GM10248 (cell line): ENCODE measurements at regions of chr3 and their contacts with region 1.

Region 1: DNA sequence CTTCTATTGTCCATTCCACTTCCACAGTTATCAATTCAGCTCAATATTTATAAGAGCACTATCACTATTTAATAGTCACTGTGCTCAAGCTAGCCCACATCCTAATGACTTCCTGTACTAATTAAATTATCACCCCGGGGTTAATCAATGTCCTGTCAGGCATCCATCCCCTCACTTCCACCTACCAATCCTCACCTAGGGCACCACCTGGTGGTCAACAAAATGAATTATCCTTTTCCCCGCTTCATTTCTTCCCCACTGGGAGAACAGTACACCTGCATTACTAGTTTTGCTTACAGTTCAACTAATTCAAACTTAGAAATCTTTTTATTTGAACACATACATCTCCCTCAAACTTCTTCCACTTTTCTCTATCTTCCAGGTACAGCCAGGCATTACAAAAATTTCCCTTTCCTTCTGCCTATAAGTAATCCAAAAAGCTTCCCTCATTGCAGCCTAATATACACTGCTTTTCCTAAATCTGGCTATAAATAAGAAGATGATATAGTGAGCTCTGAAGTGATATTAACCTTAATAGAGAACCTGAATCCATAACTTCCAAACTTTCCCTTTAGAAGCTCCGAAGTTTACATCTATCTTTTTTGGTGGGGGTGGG is 68.5 kb downstream of the TMCC1 start:
- DNase-seq: peak; percentile 49
- CTCF ChIP-seq: peak; percentile 55

Region 2: DNA sequence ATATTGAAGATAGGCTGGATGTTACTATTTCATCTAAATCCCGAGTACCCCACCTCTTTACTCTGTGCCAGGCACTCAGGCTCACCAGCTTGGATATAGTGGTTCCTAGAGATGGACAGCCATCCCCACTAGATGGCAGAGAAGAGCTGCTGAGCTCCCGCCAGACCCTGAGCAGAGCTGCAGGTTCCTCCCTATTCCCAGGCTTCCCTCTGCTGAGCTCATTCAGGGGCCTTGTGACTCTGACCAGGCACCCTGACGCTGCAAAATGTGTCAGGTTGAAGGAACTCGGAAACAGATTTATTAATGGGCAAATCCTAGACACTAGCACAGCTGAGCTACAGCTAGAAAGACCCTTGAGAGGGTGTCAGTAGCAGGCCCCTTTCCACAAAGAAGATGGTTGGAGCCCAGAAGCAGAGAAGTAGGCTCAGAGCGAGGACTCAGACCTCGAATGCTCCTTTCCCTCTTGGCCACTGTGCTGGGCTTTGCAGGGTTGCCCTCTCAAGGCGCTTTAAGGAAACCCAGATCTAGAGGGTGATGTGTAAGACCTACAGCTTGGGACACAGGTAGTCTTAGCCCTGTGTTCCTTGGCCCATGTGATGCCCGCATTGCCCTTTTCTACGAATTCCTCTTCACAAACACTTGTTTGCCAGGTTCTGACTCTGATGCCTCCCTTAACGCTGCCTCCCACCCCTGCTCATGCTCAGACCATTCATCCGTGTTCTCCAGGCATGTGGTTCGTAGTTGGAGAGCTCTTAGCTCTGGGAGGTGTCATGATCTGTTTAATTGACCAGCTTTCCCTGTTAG is 334.6 kb before region 1 on chr3:
- CTCF ChIA-PET with region 1: interaction called, 20 read pairs
- POLR2A ChIA-PET with region 1: no interaction called
- DNase-seq: peak; percentile 83
- CTCF ChIP-seq: peak; percentile 93

Region 3: GRCh38 chr3:129627429-129628168 is 197.4 kb before region 1 on chr3:
- CTCF ChIA-PET with region 1: interaction called, 15 read pairs
- POLR2A ChIA-PET with region 1: no interaction called
- DNase-seq: peak; percentile 85
- CTCF ChIP-seq: peak; percentile 90

Region 4: DNA sequence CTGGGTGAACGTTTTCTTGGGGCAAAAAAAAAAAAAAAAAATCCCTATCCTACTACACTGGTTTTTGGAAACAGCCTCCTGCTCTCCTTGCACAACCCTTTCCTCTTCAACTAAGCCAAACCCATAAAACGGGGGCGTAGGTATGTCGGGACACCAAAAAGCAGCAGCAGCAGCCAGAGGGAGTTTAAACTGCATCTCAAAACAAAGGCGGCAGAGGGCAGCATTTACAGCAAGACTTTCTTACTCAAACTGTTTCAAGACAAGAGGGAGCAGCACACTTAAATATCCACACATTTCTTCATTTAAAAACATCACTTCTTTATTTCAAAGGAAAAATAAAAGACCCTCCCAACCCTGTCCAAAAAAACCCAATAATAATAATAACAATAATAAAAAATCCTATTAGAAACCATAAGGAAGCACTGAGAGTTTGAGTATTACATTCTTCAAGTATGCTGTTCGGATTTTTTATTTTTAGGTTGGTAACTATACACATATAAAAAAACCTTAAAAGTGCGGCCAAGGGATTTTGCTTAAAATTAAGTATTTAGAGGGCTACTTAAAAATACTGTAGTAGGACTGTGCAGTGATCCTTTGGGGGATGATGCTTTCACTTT is 174.7 kb before region 1 on chr3:
- CTCF ChIA-PET with region 1: interaction called, 74 read pairs
- POLR2A ChIA-PET with region 1: no interaction called
- DNase-seq: peak; percentile 60
- CTCF ChIP-seq: peak; percentile 66

Region 5: DNA sequence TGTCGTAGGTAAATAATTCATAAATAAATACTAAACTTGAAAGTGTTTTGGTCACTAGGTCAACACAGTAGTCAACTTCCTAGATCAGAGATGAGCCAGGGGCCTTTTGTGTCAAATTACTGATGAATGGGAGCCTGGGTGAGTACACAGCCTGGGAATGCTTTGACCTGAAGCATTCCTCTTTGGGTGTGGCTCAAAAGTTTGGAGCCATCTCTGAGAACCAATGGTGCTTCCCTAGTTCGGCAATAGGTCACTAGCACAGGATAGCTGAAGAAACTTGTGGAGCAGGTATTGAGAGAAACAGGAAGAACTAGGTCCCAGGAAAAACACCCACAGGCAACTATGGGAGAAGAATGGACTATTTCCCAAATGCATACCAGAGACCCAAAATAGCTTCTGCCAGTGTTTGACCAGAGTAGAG is 162.0 kb before region 1 on chr3:
- CTCF ChIA-PET with region 1: interaction called, 14 read pairs
- POLR2A ChIA-PET with region 1: interaction called, 7 read pairs
- DNase-seq: no peak
- CTCF ChIP-seq: no peak

Region 6: GRCh38 chr3:129715854-129716253 is 109.2 kb before region 1 on chr3:
- CTCF ChIA-PET with region 1: no interaction called
- POLR2A ChIA-PET with region 1: no interaction called
- DNase-seq: no peak
- CTCF ChIP-seq: no peak

Region 7: GRCh38 chr3:129809297-129809696 is 15.7 kb before region 1 on chr3:
- CTCF ChIA-PET with region 1: interaction called, 30 read pairs
- POLR2A ChIA-PET with region 1: no interaction called
- DNase-seq: no peak
- CTCF ChIP-seq: no peak

Region 8: DNA sequence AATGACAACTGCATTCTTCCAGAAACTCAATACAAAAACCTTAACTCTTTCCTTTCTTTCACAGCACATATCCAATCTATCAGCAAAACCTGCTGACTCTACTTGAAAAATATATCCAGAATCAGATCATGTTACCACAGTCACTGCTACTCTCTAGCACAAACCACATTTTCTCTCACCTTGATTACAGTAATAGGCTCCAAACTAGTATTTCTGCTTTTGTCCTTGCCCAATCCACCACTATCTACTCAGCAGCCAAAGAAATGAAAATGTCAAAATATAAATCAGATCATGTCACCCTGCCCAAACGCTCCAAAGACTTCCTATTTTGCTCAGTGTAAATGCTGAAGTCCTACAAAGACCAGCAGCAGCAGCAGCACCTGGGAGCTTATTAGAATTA is 53.3 kb after region 1 on chr3:
- CTCF ChIA-PET with region 1: no interaction called
- POLR2A ChIA-PET with region 1: no interaction called
- DNase-seq: no peak
- CTCF ChIP-seq: no peak